ENCODE measurements at regions of chr9 and their contacts with region 1.

Region 1: DNA sequence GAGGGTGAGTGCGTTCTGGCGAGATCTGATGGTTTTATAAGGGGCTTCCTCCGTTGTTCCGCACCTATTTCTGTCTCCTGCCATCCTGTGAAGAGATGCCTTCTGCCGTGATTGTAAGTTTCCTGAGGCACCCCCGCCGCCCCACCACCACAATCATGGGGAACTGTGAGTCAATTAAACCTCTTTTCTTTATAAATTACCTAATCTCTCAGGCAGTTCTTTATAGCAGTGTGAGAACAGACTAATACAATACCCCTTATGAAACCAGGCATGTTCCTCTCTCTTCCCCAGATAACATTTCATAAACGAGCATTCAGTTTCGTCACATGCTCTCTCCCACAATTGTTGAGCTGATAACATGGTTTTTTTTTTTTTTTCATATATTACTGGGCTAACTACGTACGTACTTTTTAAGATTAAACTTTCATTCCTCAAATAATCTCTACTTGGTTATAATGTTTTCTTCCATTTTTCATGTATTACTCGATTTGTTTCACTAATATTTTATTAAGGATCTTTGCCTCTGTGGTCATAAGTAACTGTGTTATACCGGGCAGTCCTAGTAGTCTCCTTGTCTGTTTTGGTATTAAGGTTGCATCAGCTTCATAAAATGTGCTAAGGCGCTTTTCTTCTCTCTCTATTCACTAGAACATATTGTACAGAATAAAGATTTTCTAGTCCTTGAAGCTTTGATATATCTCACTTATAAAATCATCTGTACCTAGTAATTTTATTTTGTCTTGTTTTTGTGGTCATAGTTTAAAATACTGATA is 64.9 kb upstream of the MVB12B start:
- DNase-seq: no peak
- H3K4me3 ChIP-seq: no peak overlapping the region
- H3K27ac ChIP-seq: no peak overlapping the region
- H3K4me1 ChIP-seq: no peaks in the 10 kb centered on the region
- H3K27me3 ChIP-seq: peaks cover 100% of the 10 kb centered on the region
- CTCF ChIP-seq: no peak

Region 2: GRCh38 chr9:126061575-126061974 is 200.2 kb before region 1 on chr9:
- CTCF ChIA-PET with region 1: interaction called, 21 read pairs
- POLR2A ChIA-PET with region 1: no interaction called
- intact Hi-C with region 1: no loop called
- DNase-seq: no peak
- H3K4me3 ChIP-seq: no peak overlapping the region
- H3K27ac ChIP-seq: no peak overlapping the region
- H3K4me1 ChIP-seq: peaks cover 15% of the 10 kb centered on the region
- H3K27me3 ChIP-seq: peaks cover 53% of the 10 kb centered on the region
- CTCF ChIP-seq: no peak